Esophagus muscularis mucosa (tissue), 4 donors: ENCODE measurements at regions of chr21 and their contacts with region 1.

Region 1: GRCh38 chr21:18023157-18023556 is 204.0 kb upstream of the C21orf91 start:
- DNase-seq: no peak
- H3K4me3 ChIP-seq: no peak overlapping the region
- H3K27ac ChIP-seq: no peak overlapping the region
- H3K4me1 ChIP-seq: no peaks in the 10 kb centered on the region
- H3K27me3 ChIP-seq: no peaks in the 10 kb centered on the region
- CTCF ChIP-seq: no peak
- EP300 ChIP-seq: no peak
- POLR2A ChIP-seq: no peak

Region 2: DNA sequence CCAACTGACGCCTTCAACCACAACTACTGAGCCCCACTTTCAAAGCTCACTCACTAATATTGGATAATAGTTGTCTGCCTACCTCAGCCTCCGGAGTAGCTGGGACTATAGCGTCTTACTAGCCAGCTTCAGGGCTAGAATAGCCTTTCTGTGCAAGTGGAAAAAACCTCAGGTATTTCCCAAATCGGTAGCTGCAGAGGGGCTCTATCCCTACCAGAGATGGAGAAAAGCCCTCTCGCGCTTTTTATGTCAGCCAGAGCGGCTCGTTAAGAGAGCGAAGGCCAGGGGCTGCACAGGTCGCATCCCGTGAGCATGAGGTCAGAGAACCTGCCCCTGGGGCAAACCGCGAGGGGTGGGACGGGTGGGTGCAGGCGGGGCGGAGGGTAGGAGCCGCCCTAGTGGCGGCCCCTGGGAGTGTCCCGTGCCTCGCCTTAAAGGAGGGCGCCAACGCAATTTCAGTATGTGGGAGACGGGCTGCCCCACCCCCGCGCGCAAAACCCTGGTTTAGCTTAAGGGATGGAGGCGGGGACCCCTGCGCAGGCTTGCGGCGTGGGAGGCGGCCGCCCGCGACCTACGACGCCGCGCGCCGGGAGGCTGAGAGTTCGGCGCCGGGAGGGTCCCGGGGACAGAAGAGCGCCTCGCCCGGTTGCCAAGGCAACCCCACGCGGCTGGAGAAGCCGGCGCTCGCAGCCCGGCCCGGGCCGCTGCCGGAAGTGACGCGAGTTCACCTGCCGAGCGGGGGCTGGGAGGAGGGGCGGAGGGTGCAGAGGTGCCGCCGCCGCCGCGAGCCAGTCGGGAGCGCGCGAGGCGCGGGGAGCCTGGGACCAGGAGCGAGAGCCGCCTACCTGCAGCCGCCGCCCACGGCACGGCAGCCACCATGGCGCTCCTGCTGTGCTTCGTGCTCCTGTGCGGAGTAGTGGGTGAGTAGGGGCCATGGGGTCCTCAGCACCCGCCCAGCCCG is 510.6 kb before region 1 on chr21 and contains the start of gene CXADR:
- intact Hi-C with region 1: no loop called
- DNase-seq: no peak
- H3K4me3 ChIP-seq: peak within 1 kb of the TSS; percentile 63 to 81 (median 76)
- H3K27ac ChIP-seq: peak within 1 kb of the TSS in 2 of 4 donors; percentile 27 to 42
- H3K4me1 ChIP-seq: peaks cover 15 to 31% (median 25%) of the 10 kb centered on the region in 4 donors
- H3K27me3 ChIP-seq: peaks cover 0 to 34% (median 6%) of the 10 kb centered on the region in 4 donors
- CTCF ChIP-seq: peak; percentile 8 to 52 (median 23)
- EP300 ChIP-seq: no peak
- POLR2A ChIP-seq: no peak
- total RNA-seq, gene CXADR: 0.33 to 1.4 (median 0.82) TPM

Region 3: GRCh38 chr21:18070392-18070791 is 47.2 kb after region 1 on chr21:
- intact Hi-C with region 1: loop called (anchors 10 kb)
- DNase-seq: no peak
- H3K4me3 ChIP-seq: no peak overlapping the region
- H3K27ac ChIP-seq: no peak overlapping the region
- H3K4me1 ChIP-seq: no peaks in the 10 kb centered on the region
- H3K27me3 ChIP-seq: no peaks in the 10 kb centered on the region
- CTCF ChIP-seq: no peak
- EP300 ChIP-seq: no peak
- POLR2A ChIP-seq: no peak